Mammary epithelial cell (primary cell): ENCODE measurements at regions of chr17 and their contacts with region 1.

Region 1: DNA sequence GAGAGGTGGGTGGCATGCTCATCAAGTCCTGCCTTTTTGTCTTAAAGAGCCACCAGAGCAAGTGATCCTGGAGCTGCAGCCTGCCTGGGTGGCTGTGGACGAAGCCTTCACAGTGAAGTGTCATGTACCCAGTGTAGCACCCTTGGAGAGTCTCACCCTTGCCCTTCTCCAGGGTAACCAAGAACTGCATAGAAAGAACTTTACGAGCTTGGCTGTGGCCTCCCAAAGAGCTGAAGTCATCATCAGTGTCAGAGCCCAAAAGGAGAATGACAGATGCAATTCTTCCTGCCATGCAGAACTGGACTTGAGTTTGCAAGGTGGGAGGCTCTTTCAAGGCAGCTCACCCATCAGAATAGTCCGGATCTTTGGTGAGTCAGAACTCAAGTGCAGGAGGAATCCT is 14.2 kb downstream of the CSH2 start:
- DNase-seq: no peak
- H3K4me3 ChIP-seq: no peak overlapping the region
- H3K27ac ChIP-seq: no peak overlapping the region
- H3K4me1 ChIP-seq: no peaks in the 10 kb centered on the region
- H3K27me3 ChIP-seq: no peaks in the 10 kb centered on the region
- CTCF ChIP-seq: no peak

Region 2: DNA sequence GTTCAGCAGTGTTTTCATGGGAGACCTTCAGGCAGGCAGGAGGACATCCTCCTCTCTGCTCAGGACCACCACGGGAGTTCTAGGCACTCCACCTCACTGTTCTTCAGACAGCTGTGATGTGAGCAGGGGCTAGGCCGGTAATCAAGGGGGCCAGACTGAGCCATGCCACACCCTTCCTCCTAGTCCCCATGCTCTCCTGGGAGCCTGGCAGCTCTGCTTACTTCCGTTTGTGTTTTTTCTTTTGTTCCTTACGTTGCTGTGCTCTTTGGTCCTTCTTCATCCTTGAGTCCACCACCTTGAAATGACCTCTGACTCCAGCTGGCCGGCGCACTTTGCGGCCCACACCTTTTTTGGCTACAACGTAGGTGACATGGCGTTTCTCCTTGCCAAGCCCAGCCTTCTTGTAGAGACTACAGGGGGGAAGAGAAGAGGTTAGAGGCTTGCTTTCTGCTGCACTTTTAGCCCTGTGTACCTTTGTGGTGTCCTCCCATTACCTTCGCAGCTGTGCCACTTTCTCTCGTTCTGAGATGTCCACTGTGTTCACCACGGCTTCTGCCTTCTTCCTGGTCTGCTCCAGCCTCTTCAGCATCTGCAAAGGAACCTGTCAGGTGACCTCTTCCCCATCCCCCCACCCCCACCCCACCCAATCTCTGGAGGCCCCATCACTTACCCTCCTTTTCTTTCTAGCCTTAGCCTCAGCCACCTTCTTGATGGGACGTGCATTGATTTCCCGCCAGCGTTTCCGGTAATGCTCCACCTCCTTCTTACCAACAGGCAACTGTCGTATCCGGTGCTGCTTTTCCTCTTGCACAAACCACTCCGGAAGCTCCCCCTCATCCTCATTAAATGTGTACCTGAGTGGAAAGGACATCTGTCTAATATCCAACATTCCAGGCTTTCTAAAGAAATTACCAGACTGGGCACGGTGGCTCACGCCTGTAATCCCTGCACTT is 39.4 kb before region 1 on chr17:
- CTCF ChIA-PET with region 1: no interaction called
- dilution Hi-C with region 1: no loop called
- in situ Hi-C with region 1: no loop called
- intact Hi-C with region 1: no loop called
- DNase-seq: no peak
- H3K4me3 ChIP-seq: no peak overlapping the region
- H3K27ac ChIP-seq: no peak overlapping the region
- H3K4me1 ChIP-seq: no peaks in the 10 kb centered on the region
- H3K27me3 ChIP-seq: no peaks in the 10 kb centered on the region
- CTCF ChIP-seq: no peak

Region 3: DNA sequence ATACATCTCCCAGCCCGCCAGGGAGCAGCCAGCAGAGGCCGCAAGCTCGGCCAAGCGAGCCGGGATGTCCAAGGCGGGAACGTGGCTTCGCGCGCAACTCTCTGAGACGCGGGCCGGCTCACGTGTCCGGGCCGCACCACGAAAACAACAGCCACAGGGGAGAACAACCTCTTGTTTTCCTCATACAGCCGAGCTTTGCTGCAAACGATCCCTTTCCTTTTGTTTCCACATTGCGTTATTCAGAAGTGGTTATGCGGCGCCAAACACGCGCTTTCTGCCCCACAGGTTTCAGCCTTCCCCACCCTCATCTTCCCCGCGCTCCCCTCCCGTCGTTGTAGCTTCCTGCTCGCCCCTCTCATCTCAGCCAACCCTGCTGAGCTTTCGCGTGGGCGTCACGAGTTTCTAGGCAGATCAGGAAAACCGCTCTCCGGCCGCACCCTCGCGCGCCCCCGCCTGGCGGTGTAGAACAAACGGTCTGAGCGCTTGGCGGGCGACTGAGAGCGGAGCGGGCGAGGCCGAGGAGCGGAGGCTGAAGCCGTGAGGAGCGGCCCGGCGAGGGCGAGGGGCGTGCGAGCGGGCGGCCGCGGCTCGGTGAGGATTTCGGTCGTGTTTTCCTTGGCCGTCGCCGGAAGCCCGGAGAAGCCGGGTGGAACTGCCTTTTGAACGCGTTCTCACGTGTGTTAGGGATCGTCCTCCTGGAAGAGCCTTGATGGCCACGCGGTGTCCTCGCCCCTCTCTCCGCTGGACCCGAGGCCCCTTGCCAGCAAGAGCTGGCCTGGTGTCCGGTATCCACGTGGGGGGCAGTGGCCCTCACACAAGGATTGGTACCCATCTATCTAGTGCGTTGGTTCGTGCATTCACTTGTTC is 10.2 kb before region 1 on chr17:
- CTCF ChIA-PET with region 1: interaction called, 27 read pairs
- dilution Hi-C with region 1: no loop called
- in situ Hi-C with region 1: no loop called
- intact Hi-C with region 1: no loop called
- DNase-seq: peak; percentile 88
- H3K4me3 ChIP-seq: peak overlapping the region in 2 of 3 experiments; percentile 30 to 36
- H3K27ac ChIP-seq: peak overlapping the region; percentile 70
- H3K4me1 ChIP-seq: no peaks in the 10 kb centered on the region
- H3K27me3 ChIP-seq: no peaks in the 10 kb centered on the region
- CTCF ChIP-seq: peak; percentile 42 to 71

Region 4: DNA sequence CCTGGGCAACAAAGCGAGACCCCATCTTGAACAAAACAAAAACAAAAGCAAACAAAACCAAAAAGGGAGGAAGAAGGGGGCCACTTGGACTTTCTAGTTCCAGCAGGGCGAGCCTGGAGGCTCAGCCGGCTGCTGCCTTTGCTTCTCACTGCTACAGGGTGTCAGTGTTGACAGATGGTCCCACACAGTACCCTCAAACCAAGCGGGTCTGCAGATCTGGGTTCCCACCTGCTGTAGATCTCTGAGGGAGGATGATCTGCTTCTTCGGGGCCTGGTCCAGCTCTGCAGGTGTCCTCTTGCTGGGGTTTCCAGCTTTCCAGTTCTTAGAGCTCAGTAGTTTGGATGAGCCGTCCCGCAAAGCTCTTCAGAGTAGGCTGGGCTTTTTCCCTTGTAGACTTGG is 45.1 kb after region 1 on chr17:
- CTCF ChIA-PET with region 1: no interaction called
- dilution Hi-C with region 1: no loop called
- in situ Hi-C with region 1: no loop called
- intact Hi-C with region 1: loop called (anchors 1 kb)
- DNase-seq: no peak
- H3K4me3 ChIP-seq: no peak overlapping the region
- H3K27ac ChIP-seq: no peak overlapping the region
- H3K4me1 ChIP-seq: no peaks in the 10 kb centered on the region
- H3K27me3 ChIP-seq: peaks cover 3% of the 10 kb centered on the region
- CTCF ChIP-seq: no peak